Activated CD4-positive, alpha-beta T cell treated with anti-CD3 and anti-CD28 coated beads, Interleukin-2, amount 10 ng/mL, durations not matched to agents 24 days and 14 days (primary cell): ENCODE measurements at regions of chr2 and their contacts with region 1.

Region 1: GRCh38 chr2:158024288-158024898 is 77.3 kb upstream of the UPP2 start:
- DNase-seq: peak; percentile 87
- H3K4me3 Mint-ChIP-seq: no peak overlapping the region
- H3K27ac Mint-ChIP-seq: no peak overlapping the region
- H3K4me1 Mint-ChIP-seq: peaks cover 8% of the 10 kb centered on the region
- H3K27me3 Mint-ChIP-seq: no peaks in the 10 kb centered on the region

Region 2: GRCh38 chr2:157880927-157881326 is 143.5 kb before region 1 on chr2:
- intact Hi-C with region 1: no loop called
- DNase-seq: no peak
- H3K4me3 Mint-ChIP-seq: no peak overlapping the region
- H3K27ac Mint-ChIP-seq: no peak overlapping the region
- H3K4me1 Mint-ChIP-seq: peaks cover 22% of the 10 kb centered on the region
- H3K27me3 Mint-ChIP-seq: no peaks in the 10 kb centered on the region

Region 3: DNA sequence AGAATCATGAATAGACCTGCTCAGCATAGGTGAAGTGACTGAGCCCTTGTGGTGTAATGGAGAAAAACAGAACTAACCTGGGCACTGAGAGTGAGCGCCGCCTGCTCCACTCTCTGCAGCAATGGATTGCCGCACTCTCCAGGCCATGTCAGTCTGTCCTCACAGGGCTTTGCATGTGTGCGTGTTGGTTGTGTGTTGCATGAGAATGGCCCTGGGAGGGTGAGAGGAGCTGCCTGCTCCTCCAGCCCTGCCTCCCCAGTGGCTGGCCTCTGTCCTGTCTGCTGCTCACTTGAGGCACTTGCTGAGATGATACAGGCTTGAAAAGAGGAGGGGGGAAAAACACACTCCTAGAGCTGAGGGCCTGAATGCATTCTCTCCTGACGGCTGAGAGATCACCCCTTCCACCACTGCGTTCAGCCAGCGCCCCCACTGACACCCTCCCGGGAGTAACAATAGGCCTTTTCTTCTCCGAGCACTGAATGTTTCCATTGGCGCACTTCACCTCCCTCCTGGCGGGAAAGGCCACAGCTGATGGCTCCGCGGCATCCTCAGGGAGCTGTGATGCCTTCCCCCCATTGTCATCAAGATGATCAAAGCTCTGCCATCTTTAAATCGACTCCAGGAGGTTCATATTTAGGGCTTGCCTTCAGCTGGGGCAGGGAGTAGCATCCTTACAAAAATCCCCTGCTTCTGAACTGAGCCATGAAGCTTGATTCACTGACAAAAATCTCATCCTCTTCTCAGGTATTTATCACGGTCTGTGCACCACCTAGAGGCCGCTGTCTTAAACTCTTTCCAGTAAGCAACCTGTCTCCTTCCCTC is 720.9 kb after region 1 on chr2:
- intact Hi-C with region 1: loop called (anchors 1 kb)
- DNase-seq: peak; percentile 73
- H3K4me3 Mint-ChIP-seq: no peak overlapping the region
- H3K27ac Mint-ChIP-seq: no peak overlapping the region
- H3K4me1 Mint-ChIP-seq: no peaks in the 10 kb centered on the region
- H3K27me3 Mint-ChIP-seq: peaks cover 7% of the 10 kb centered on the region

Region 4: DNA sequence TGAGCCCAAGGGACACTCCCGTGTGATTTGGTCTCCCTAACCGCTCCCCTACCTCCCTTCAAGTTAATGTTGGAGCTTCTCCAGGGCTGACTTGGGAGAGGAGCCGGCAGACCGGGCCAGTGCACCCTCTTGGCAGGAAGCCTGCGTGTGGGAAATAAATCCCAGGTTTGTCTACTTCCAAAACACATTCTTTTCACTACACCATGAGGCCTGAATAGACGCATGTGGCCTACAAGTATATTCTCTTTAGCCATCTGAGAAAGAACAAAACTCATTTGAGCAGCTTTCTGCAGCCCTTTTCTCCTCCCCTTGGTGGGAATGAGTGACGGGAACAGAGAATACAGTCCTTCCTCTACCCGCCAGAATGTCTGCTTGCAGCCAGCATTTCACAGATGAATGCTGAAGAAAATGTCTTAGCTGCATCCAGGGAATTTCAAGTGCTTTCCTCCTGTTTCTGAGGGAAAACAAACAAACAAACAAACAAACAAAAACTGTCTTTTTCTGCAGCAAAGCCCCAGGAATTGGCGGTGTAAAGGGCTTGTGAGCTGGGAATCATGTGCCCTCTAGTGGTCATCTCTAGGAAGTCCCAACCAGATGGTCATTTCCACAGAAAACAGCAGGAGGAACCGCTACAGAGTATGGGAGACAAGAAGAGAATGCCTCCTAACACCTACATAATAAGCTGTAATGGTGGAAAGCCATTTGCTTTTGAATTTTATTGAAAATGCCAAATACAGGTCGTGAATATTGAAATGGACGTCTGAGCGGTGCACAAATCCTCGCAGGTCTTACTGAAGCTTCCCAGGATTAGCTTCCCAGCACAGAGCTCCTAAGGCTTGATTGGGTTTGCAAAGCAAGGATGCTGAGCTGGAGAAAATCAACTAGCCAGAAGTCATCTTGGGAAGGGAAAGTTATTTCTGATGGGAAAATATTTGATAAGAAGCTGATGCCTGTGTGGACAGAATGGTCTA is 729.5 kb after region 1 on chr2:
- intact Hi-C with region 1: loop called (anchors 2 kb)
- DNase-seq: peak; percentile 77
- H3K4me3 Mint-ChIP-seq: no peak overlapping the region
- H3K27ac Mint-ChIP-seq: no peak overlapping the region
- H3K4me1 Mint-ChIP-seq: no peaks in the 10 kb centered on the region
- H3K27me3 Mint-ChIP-seq: peaks cover 8% of the 10 kb centered on the region